ENCODE measurements at regions of chr12 and their contacts with region 1.

Region 1: GRCh38 chr12:125533434-125534029 is 468.3 kb downstream of the AACS start:
- DNase-seq: no peak
- ATAC-seq: no peak
- H3K4me3 ChIP-seq: no peak overlapping the region
- H3K27ac ChIP-seq: no peak overlapping the region
- H3K4me1 ChIP-seq: no peaks in the 10 kb centered on the region
- H3K27me3 ChIP-seq: peaks cover 0 to 3% (median 0%) of the 10 kb centered on the region in 3 donors
- CTCF ChIP-seq: peak in 2 of 5 experiments; percentile 21 to 37
- POLR2A ChIP-seq: no peak

Region 2: DNA sequence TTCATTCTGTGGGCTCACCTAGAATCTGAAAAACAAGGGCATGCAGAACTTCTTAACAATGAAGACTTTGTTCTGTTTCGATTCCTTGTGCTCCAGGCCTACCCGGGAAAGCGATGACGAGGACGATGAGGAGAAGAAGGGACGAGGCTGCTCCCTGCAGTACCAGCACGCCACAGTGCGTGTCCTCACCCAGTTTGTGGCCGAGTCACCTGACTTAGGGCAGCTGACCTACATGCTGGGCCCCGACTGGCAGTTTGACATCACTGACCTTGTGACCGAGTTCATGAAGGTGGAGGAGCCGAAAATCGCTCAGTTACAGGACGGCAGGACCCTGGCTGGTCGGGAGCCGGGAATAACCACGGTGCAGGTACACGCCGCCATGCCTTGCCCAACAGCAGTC is 117.1 kb after region 1 on chr12:
- in situ Hi-C with region 1: no loop called
- intact Hi-C with region 1: no loop called
- DNase-seq: no peak
- ATAC-seq: no peak
- H3K4me3 ChIP-seq: no peak overlapping the region
- H3K27ac ChIP-seq: no peak overlapping the region
- H3K4me1 ChIP-seq: no peaks in the 10 kb centered on the region
- H3K27me3 ChIP-seq: no peaks in the 10 kb centered on the region
- CTCF ChIP-seq: no peak
- POLR2A ChIP-seq: no peak

Region 3: DNA sequence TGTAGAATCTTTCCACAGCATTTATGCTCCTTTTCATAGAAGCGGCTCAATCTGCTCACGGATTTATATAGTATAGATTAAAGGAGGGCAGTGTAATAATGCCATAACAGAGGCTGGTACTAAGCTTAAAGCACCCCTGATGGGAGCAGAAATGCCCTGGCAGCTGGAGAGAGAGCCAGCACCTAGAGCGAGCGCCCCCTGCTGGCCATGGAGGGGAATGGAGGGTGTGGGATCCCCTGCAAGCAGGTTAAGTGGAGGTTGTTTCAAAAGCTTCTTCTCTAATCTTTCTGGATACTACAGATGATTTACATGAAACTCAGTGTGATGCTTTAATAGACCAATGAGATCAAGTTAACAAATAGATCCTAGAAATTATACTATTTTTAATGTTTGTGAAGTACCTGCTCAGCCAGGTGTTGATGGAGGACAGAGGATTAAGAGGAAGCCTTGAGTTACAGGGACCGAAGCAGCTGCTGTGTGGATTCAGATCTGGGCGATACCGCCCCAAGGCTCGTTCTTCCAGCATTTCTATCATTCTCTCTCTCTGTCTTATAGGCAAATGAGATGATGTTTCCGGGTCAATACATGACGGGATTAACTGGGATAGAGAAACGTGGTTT is 1214.1 kb after region 1 on chr12:
- in situ Hi-C with region 1: no loop called
- intact Hi-C with region 1: loop called (anchors 10 kb)
- DNase-seq: no peak
- ATAC-seq: no peak
- H3K4me3 ChIP-seq: no peak overlapping the region
- H3K27ac ChIP-seq: no peak overlapping the region
- H3K4me1 ChIP-seq: no peaks in the 10 kb centered on the region
- H3K27me3 ChIP-seq: no peaks in the 10 kb centered on the region
- CTCF ChIP-seq: peak; percentile 23 to 70 (median 40)
- POLR2A ChIP-seq: no peak

Region 4: DNA sequence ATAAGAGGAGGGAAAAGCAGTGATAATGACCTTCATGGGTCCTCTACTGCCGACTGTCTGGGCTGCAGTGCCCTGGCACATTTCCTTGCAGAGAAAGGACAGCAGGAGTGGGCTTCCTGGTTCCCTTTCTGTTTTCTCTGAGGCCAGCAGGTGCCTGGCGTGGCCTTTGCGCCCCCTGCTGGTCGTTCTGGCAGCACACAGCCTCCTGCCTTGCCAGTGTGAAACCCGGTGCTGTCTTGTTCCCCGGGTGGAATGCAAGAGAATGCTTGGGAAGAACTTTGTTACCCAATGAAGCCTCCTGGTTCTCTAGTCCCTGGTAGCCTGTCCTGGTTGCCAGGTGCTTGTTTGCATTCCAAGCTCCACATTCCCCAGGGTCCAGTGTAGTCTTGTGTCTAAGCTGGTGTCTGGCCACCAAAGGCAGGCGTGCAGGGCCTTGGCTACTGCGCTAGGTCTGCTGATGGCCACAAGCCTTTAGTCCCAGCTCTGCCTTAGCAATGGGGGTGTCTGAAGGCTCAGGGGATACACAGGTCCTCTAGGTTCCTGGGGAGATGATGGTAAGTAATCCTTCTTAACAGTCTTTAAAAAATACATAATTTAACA is 1341.0 kb after region 1 on chr12:
- in situ Hi-C with region 1: no loop called
- intact Hi-C with region 1: loop called (anchors 10 kb)
- DNase-seq: peak in 1 of 2 donors; percentile 2
- ATAC-seq: no peak
- H3K4me3 ChIP-seq: no peak overlapping the region
- H3K27ac ChIP-seq: no peak overlapping the region
- H3K4me1 ChIP-seq: no peaks in the 10 kb centered on the region
- H3K27me3 ChIP-seq: no peaks in the 10 kb centered on the region
- CTCF ChIP-seq: peak; percentile 26 to 73 (median 45)
- POLR2A ChIP-seq: no peak